PC-9 (cell line): ENCODE measurements at regions of chrX and their contacts with region 1.

Region 1: DNA sequence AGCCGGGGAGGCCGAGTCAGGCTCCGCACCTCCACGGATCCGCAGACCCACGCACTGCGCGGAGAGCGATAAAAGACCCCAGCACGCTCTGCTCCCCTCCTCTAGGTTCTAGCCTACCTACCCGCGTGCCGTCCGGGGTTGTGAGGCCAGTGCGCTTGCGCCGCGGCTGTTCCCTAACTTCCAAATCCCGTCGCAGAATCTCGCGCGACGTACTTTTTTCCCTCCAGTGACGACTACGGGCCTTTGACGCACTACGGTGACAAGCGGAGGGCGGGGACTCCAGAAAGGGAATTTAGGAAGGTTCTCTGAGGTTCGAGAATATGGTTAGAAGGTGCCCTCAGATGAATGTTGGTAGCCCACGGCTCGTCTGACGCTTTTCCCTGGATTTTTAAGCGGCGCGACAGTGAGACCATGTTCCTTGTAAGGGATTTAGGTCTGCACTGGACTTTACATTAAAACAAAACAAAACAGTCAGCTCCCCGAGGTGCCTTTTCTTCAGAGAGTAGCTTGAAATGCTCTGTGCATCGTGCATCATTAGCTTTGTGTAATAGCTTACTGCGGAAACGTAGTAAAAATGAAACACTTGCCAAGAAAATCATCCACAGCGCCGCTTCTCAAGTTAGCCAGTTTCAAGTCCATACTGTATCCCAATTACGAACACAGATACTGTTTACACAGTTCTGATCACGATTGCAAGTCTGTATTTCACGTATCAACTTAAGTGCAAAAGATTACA is at the start of gene NKRF:
- DNase-seq: peak; percentile 86 to 94
- H3K4me3 ChIP-seq: peak within 1 kb of the TSS; percentile 79
- H3K27ac ChIP-seq: peak within 1 kb of the TSS; percentile 51
- H3K4me1 ChIP-seq: peaks cover 29% of the 10 kb centered on the region
- H3K27me3 ChIP-seq: no peaks in the 10 kb centered on the region
- CTCF ChIP-seq: no peak
- total RNA-seq, gene NKRF: 25.7 TPM in 2 replicates

Region 2: DNA sequence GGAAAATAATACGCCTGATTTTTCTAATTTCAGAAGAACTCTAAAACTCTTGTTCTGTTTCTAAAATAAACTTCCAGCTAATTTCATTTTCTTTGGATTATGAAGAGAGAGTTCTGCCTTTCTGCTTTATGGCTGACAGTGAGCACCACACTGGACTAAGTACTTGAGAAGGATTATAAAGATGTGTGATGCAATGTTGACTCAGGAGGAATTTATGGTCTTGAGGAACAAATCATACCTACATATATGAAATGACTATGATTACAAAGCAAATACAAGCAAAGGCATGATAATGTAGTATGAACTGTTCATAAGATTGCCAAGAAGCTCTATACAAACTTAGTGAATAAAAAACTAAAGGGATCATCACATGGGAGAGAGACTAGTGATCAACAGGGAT is 151.2 kb before region 1 on chrX:
- CTCF ChIA-PET with region 1: no interaction called
- POLR2A ChIA-PET with region 1: no interaction called
- intact Hi-C with region 1: no loop called
- DNase-seq: no peak
- H3K4me3 ChIP-seq: no peak overlapping the region
- H3K27ac ChIP-seq: no peak overlapping the region
- H3K4me1 ChIP-seq: no peaks in the 10 kb centered on the region
- H3K27me3 ChIP-seq: no peaks in the 10 kb centered on the region
- CTCF ChIP-seq: no peak

Region 3: GRCh38 chrX:119583431-119584059 is 22.9 kb before region 1 on chrX:
- CTCF ChIA-PET with region 1: interaction called, 8 read pairs
- POLR2A ChIA-PET with region 1: interaction called, 20 read pairs
- intact Hi-C with region 1: no loop called
- DNase-seq: no peak
- H3K4me3 ChIP-seq: no peak overlapping the region
- H3K27ac ChIP-seq: no peak overlapping the region
- H3K4me1 ChIP-seq: no peaks in the 10 kb centered on the region
- H3K27me3 ChIP-seq: no peaks in the 10 kb centered on the region
- CTCF ChIP-seq: no peak

Region 4: DNA sequence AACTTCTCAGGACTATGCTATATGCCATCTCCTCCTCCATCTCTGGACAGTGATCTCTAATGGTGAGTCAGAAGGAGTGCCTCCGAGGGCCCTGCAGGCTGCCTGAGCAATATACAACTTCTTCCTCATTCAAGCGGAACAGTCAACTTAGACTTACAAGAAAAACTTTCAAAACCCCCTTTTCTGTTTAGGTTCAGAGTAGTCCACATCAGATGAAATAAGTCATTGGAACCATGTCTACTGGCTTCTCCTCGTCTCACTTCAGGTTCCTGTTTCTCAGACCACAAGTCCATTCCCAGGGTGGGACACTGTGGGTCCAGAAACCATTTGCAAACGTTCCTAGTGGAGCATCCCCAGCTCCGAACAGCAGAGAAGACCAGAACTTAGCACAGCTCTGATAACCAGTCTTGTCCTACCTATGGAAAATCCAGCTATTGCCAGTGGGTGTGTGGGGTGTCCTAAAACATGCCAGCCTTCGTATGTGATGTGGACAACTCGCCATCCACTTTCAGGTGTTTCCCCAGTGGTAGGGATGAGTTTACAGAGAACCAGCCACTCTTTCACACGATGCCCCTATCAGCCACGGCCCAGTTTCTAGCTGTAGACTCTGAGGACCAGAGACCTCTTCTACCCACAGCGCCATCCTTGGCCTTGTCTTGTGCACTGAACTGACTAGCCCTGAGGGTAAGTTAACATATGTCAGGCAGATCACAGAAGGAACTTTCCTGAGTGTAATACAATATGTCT is 32.5 kb after region 1 on chrX:
- CTCF ChIA-PET with region 1: no interaction called
- POLR2A ChIA-PET with region 1: no interaction called
- intact Hi-C with region 1: no loop called
- DNase-seq: no peak
- H3K4me3 ChIP-seq: no peak overlapping the region
- H3K27ac ChIP-seq: no peak overlapping the region
- H3K4me1 ChIP-seq: no peaks in the 10 kb centered on the region
- H3K27me3 ChIP-seq: no peaks in the 10 kb centered on the region
- CTCF ChIP-seq: no peak

Region 5: GRCh38 chrX:119729408-119730201 is 123.2 kb after region 1 on chrX:
- CTCF ChIA-PET with region 1: interaction called, 26 read pairs
- POLR2A ChIA-PET with region 1: interaction called, 4 read pairs
- intact Hi-C with region 1: loop called (anchors 1 kb)
- DNase-seq: peak; percentile 57 to 63
- H3K4me3 ChIP-seq: no peak overlapping the region
- H3K27ac ChIP-seq: no peak overlapping the region
- H3K4me1 ChIP-seq: no peaks in the 10 kb centered on the region
- H3K27me3 ChIP-seq: no peaks in the 10 kb centered on the region
- CTCF ChIP-seq: peak; percentile 78

Region 6: GRCh38 chrX:119791438-119792231 is 185.2 kb after region 1 on chrX and contains the start of gene RPL39:
- CTCF ChIA-PET with region 1: interaction called, 4 read pairs
- POLR2A ChIA-PET with region 1: interaction called, 6 read pairs
- intact Hi-C with region 1: loop called (anchors 5 kb)
- DNase-seq: peak; percentile 84 to 86
- H3K4me3 ChIP-seq: peak within 1 kb of the TSS; percentile 96
- H3K27ac ChIP-seq: peak within 1 kb of the TSS; percentile 94
- H3K4me1 ChIP-seq: peaks cover 34% of the 10 kb centered on the region
- H3K27me3 ChIP-seq: no peaks in the 10 kb centered on the region
- CTCF ChIP-seq: no peak
- total RNA-seq, gene RPL39: 3,176 and 3,660 TPM in 2 replicates

Region 7: GRCh38 chrX:119871599-119872395 is 265.3 kb after region 1 on chrX and contains the starts of genes NDUFA1 and RNF113A:
- CTCF ChIA-PET with region 1: no interaction called
- POLR2A ChIA-PET with region 1: no interaction called
- intact Hi-C with region 1: loop called (anchors 5 kb)
- DNase-seq: peak; percentile 86 to 89
- H3K4me3 ChIP-seq: peak within 1 kb of the TSS; percentile 77
- H3K27ac ChIP-seq: peak within 1 kb of the TSS; percentile 97
- H3K4me1 ChIP-seq: peaks cover 21% of the 10 kb centered on the region
- H3K27me3 ChIP-seq: no peaks in the 10 kb centered on the region
- CTCF ChIP-seq: no peak
- total RNA-seq, gene NDUFA1: 181 and 189 TPM in 2 replicates
- total RNA-seq, gene RNF113A: 23.2 and 24.2 TPM in 2 replicates

Region 8: DNA sequence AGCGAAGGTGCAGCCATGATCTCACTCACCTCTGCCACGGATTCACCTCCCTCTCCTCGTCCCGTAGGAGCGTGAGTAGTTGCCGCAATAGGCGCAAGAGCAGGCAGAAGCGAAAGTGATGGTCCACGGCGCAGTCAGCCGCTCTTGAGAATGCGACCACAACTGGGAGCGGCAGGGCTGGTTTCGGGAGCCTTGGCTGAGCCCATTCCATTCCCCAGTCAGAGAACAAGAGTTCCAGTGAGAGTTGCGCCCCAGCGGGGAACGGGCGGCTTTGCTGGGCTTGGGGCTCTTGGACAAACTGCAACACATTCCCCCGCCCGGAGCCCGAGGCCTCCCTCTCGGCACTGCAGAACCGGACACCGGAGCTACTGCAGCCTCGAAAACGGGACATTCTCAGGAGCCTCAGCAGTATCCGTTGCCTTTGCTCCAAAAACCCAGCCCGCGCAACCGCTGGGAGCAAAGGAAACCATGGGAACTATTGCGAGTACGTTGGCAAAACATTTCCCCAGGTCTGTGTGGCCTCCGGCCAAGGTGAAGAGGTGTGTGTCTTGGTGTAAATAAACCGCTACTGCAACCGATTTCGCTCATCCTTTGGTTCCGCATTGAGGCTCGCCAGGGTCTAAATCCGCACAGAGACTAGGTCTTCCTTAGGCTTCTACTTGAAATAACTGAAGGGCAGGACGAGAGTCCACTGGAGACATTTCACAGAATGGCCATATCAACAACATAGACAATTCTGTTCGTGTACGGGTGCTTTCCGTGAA is 638.5 kb after region 1 on chrX:
- CTCF ChIA-PET with region 1: interaction called, 23 read pairs
- POLR2A ChIA-PET with region 1: no interaction called
- intact Hi-C with region 1: no loop called
- DNase-seq: peak; percentile 81 to 85
- H3K4me3 ChIP-seq: peak overlapping the region; percentile 64
- H3K27ac ChIP-seq: peak overlapping the region; percentile 90
- H3K4me1 ChIP-seq: peaks cover 17% of the 10 kb centered on the region
- H3K27me3 ChIP-seq: no peaks in the 10 kb centered on the region
- CTCF ChIP-seq: no peak